CD4-positive, alpha-beta memory T cell (primary cell): ENCODE measurements at regions of chr3 and their contacts with region 1.

Region 1: DNA sequence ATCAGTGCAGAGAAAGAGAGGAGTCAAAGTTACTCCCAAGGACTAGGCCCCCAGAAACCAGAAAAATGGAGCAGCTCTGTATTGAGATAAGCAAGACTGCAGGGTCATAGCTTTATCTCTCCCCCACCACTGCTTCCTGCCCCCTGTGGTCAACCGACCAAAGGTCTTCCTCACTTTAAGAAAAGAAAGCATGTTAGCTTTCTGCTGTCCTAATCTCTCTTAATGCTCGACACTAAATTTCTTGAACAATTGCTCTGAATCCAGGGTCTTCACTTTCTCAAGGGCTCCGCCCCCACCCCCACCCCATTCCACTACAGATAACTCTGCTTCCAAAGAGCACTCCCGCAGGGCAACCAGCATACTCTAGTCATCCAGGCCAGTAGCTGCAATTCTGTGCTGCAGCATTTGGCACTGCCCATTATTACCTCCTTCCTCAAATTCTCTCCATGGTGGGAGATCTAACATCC is 31.9 kb downstream of the TNIK start:
- DNase-seq: no peak
- H3K4me3 ChIP-seq: no peak overlapping the region
- H3K4me3 Mint-ChIP-seq: no peak overlapping the region
- H3K27ac ChIP-seq: no peak overlapping the region
- H3K27ac Mint-ChIP-seq: no peak overlapping the region
- H3K4me1 ChIP-seq: peaks cover 25% of the 10 kb centered on the region
- H3K4me1 Mint-ChIP-seq: peaks cover 7 to 29% (median 16%) of the 10 kb centered on the region in 4 donors
- H3K27me3 ChIP-seq: no peaks in the 10 kb centered on the region
- H3K27me3 Mint-ChIP-seq: no peaks in the 10 kb centered on the region

Region 2: DNA sequence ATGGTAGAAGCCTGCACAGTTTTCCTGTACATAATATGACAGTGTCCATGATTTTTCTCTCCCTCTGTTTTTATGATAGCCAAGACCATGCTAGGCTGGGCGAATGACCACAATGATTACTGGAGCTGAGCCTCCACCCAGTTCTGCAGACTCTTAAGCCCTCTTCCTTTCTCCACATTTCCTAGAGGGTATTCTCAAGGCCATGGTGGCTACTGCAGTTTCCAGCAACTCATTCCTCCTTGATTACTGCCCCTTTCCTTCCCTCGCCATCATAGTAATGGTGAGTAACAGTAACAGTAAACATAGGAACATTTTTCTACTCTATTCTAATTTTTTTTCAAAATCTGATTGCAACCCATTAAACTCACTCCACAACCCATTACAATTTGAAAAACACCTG is 11.6 kb after region 1 on chr3:
- CTCF ChIA-PET with region 1: interaction called, 4 read pairs
- POLR2A ChIA-PET with region 1: no interaction called
- intact Hi-C with region 1: loop called (anchors 1 kb)
- DNase-seq: no peak
- H3K4me3 ChIP-seq: no peak overlapping the region
- H3K4me3 Mint-ChIP-seq: no peak overlapping the region
- H3K27ac ChIP-seq: no peak overlapping the region
- H3K27ac Mint-ChIP-seq: peak overlapping the region in 2 of 7 donors; percentile 27 to 77
- H3K4me1 ChIP-seq: peaks cover 87% of the 10 kb centered on the region
- H3K4me1 Mint-ChIP-seq: peaks cover 57 to 88% (median 73%) of the 10 kb centered on the region in 4 donors
- H3K27me3 ChIP-seq: no peaks in the 10 kb centered on the region
- H3K27me3 Mint-ChIP-seq: no peaks in the 10 kb centered on the region

Region 3: DNA sequence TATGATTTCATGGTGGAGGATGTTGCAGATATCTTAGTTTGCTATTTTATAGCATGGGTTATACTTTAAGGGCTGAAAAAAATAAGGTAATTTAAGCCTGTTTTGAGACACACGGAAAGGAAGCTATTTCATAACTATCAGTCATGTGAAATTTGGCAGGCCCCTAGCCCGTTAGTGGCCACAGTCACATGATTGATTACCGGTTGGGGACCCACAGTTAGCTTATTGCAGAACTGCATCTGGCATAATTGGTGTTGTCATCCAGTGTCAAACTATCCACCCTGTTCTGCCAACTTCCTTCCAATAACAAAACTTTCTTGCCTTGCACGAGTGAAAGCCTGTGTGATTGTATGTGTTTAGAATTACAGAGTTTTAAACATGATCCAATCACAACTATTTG is 646.2 kb after region 1 on chr3:
- CTCF ChIA-PET with region 1: no interaction called
- POLR2A ChIA-PET with region 1: no interaction called
- intact Hi-C with region 1: no loop called
- DNase-seq: no peak
- H3K4me3 ChIP-seq: no peak overlapping the region
- H3K4me3 Mint-ChIP-seq: no peak overlapping the region
- H3K27ac ChIP-seq: no peak overlapping the region
- H3K27ac Mint-ChIP-seq: no peak overlapping the region
- H3K4me1 ChIP-seq: no peaks in the 10 kb centered on the region
- H3K4me1 Mint-ChIP-seq: peaks cover 4 to 11% (median 8%) of the 10 kb centered on the region in 4 donors
- H3K27me3 ChIP-seq: no peaks in the 10 kb centered on the region
- H3K27me3 Mint-ChIP-seq: no peaks in the 10 kb centered on the region